ENCODE measurements at regions of chr11 and their contacts with region 1.

Region 1: DNA sequence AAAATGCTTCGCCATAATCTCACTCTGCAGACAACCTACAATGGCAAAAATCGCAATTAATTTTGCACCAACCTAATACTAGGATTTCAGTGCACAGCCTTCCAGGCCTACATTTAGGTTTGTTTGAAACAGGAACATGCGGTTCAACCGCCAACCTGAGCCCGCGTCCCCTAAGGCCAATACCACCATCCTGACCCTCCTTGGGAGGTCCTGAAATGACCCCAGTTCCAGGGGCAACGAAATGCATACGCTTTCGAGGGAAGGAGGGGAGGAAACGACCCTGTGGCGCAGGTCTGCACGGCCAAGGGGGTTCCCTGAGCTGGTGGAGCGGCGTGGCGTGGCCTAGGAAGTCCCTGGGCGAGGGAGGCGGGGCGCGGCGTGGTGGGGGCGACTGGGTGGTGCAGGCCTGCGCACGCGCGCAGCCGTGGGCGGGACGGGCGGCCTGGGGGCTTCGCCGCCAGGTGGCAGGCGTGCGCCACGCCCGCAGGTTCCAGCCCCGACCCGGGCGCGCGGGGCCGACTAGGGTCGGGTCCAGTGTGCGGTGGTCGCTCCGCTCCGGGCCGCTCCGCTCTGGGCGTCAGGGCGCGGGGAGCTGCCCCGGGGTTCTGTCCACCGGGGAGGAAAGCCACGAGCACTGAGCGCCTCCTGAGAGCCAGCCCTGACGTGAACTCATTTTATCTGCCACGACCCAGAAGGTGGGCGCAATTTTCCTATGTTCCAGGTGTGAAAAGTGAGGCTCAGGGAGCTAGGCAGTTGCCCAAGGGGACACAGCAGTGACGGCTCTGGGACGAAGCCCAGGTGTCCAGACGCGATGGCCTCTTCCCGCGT is 94.1 kb downstream of the SWAP70 start:
- DNase-seq: no peak
- ATAC-seq: peak; percentile 86
- H3K4me3 ChIP-seq: peak overlapping the region; percentile 88
- H3K27ac ChIP-seq: peak overlapping the region; percentile 66
- H3K4me1 ChIP-seq: peaks cover 44% of the 10 kb centered on the region
- H3K27me3 ChIP-seq: no peaks in the 10 kb centered on the region
- CTCF ChIP-seq: peak; percentile 70 to 87 (median 83); a peak in 5 of 6 replicates
- EP300 ChIP-seq: peak in 1 of 2 experiments; percentile 58; a peak in 1 of 4 replicates
- POLR2A ChIP-seq: peak; percentile 77
- RAD21 ChIP-seq: peak; percentile 79

Region 2: DNA sequence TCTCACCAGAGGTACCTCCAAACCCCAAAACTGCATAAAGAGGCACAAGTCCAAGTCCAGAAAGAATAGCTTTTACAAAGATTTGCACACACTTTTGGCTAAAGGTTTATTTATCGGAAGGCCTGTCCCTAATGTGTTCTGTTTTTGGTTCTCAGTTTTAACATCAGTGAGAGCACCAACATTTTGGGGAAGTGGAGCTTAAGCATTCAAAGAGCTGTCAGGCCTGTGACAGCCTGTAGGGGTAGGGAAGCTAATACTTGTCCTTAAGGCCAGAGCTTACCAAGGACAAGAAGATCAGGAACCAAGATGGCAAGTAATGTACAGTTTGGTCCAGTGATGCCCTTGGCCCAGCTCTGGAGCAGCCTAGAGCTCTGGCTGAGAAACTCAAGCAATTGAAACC is 627.7 kb before region 1 on chr11:
- CTCF ChIA-PET with region 1: no interaction called
- POLR2A ChIA-PET with region 1: no interaction called
- RAD21 ChIA-PET with region 1: no interaction called
- SMC1A ChIA-PET with region 1: no interaction called
- in situ Hi-C with region 1: no loop called
- intact Hi-C with region 1: no loop called
- DNase-seq: no peak
- ATAC-seq: peak; percentile 72
- H3K4me3 ChIP-seq: no peak overlapping the region
- H3K27ac ChIP-seq: no peak overlapping the region
- H3K4me1 ChIP-seq: no peaks in the 10 kb centered on the region
- H3K27me3 ChIP-seq: no peaks in the 10 kb centered on the region
- CTCF ChIP-seq: peak in 2 of 3 experiments; percentile 15 to 16; a peak in 2 of 6 replicates
- EP300 ChIP-seq: no peak
- POLR2A ChIP-seq: no peak
- RAD21 ChIP-seq: no peak

Region 3: DNA sequence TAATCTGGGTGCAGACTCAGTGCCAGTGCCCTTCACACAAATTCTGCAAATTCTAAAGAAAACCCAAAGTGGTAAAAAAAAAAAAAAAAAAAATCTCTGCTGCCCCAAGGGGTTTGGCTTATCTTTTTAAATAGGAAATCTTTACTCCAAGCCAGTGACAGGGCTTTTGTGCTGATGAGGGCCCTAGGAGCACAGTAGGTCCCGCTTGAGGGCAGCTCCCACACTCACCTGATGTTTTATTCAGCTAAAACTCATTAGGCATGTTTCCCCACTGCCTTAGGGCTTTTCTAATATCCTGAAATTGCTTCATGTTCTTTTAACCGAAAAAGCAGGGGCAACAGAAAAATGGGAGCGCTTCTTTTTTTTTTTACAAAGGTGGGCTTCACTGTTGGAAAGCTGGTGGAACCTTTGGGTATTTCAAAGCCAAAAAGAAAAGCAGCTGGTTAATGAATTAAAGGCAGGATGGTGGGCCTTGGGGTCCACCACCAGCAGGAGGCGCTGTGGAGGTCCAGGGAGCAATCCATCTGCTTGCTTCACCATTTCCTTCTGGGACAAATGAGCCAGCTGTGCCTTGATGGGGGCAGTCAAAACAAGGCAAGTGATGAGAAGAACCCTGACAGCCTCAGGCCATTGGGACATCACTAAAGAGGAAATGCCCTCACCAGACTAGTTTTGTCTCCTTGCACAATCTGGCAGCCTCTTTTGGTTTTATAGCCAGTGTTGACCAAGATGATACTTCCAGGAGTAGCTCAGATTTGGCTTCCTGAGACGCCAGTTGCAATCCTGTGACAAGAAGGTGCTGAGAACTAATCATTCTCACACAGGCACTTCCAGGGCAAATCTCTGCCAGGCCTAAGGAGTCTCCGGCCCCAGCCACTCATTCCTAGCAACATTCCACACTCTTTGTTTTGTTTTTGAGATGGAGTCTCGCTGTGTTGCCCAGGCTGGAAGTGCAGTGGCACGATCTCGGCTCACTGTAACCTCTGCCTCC is 222.9 kb before region 1 on chr11:
- CTCF ChIA-PET with region 1: interaction called, 10 read pairs
- POLR2A ChIA-PET with region 1: no interaction called
- RAD21 ChIA-PET with region 1: interaction called, 6 read pairs
- SMC1A ChIA-PET with region 1: interaction called, 3 read pairs
- in situ Hi-C with region 1: loop called (anchors 5 kb)
- intact Hi-C with region 1: no loop called
- DNase-seq: peak; percentile 25
- ATAC-seq: peak; percentile 87
- H3K4me3 ChIP-seq: no peak overlapping the region
- H3K27ac ChIP-seq: no peak overlapping the region
- H3K4me1 ChIP-seq: no peaks in the 10 kb centered on the region
- H3K27me3 ChIP-seq: no peaks in the 10 kb centered on the region
- CTCF ChIP-seq: peak; percentile 79 to 92 (median 86)
- EP300 ChIP-seq: no peak
- POLR2A ChIP-seq: no peak
- RAD21 ChIP-seq: peak; percentile 79

Region 4: GRCh38 chr11:9861860-9862725 is 104.1 kb after region 1 on chr11:
- CTCF ChIA-PET with region 1: interaction called, 4 read pairs
- POLR2A ChIA-PET with region 1: no interaction called
- RAD21 ChIA-PET with region 1: interaction called, 4 read pairs
- SMC1A ChIA-PET with region 1: no interaction called
- in situ Hi-C with region 1: no loop called
- intact Hi-C with region 1: loop called (anchors 5 kb)
- DNase-seq: peak; percentile 31
- ATAC-seq: peak; percentile 100
- H3K4me3 ChIP-seq: no peak overlapping the region
- H3K27ac ChIP-seq: no peak overlapping the region
- H3K4me1 ChIP-seq: no peaks in the 10 kb centered on the region
- H3K27me3 ChIP-seq: no peaks in the 10 kb centered on the region; a peak in 1 of 4 replicates
- CTCF ChIP-seq: peak; percentile 78 to 89 (median 85)
- EP300 ChIP-seq: no peak
- POLR2A ChIP-seq: no peak
- RAD21 ChIP-seq: peak; percentile 88

Region 5: GRCh38 chr11:10076458-10077141 is 318.6 kb after region 1 on chr11:
- CTCF ChIA-PET with region 1: interaction called, 15 read pairs
- POLR2A ChIA-PET with region 1: no interaction called
- RAD21 ChIA-PET with region 1: interaction called, 6 read pairs
- SMC1A ChIA-PET with region 1: no interaction called
- in situ Hi-C with region 1: no loop called
- intact Hi-C with region 1: loop called (anchors 2 kb)
- DNase-seq: no peak
- ATAC-seq: peak; percentile 87
- H3K4me3 ChIP-seq: no peak overlapping the region
- H3K27ac ChIP-seq: no peak overlapping the region
- H3K4me1 ChIP-seq: no peaks in the 10 kb centered on the region
- H3K27me3 ChIP-seq: no peaks in the 10 kb centered on the region
- CTCF ChIP-seq: peak; percentile 75 to 89 (median 82)
- EP300 ChIP-seq: no peak
- POLR2A ChIP-seq: no peak
- RAD21 ChIP-seq: peak; percentile 65

Region 6: DNA sequence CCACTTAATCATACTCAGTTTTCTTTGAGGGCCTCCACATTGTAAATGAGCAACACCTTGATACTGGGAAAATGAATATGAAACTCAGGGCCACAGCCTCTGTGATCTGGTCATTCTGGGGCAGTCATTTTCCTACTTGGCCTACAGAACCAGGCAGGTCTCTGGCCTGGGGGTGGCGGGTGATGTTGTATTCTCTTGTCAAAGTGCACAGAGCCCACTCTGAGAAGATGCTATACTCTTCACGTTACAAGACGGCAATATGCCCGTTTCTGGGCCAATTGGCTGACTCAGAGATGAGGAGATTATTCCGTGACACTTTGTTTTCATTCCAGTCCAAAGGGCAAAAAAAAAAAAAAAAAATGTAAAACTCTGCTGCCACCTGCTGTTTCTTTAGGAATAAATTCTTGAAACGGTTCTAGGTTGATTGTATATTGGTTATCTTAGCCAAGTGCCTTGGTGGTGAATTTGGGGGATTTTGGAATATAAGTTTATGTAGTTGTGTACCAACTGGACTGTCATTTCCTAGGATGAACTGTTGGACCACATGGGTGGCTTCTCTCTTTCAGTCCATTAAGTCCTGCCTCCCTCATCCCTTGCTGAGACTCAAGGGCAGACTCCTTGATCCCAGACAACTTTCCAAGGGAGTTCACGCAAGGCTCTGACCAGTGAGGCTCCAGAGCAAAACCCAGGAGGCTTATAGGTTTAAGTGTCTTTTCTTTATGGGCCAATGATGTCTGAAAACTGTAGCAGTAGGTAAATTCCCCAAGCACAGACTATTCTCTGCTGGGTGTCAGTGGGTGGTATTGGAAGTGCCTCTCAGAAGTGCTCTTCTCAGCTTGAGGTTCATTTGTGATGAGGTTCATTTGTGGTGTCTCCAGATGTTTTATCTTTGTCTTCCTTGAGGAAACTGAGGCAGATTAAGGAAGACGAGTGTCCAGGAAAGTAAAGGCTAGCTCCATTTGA is 565.1 kb after region 1 on chr11:
- CTCF ChIA-PET with region 1: interaction called, 6 read pairs
- POLR2A ChIA-PET with region 1: no interaction called
- RAD21 ChIA-PET with region 1: interaction called, 3 read pairs
- SMC1A ChIA-PET with region 1: no interaction called
- in situ Hi-C with region 1: loop called (anchors 10 kb)
- intact Hi-C with region 1: loop called (anchors 5 kb)
- DNase-seq: no peak
- ATAC-seq: peak; percentile 84
- H3K4me3 ChIP-seq: no peak overlapping the region
- H3K27ac ChIP-seq: no peak overlapping the region
- H3K4me1 ChIP-seq: peaks cover 8% of the 10 kb centered on the region
- H3K27me3 ChIP-seq: 0 out of 4 replicates have a peak, but pooled peaks cover 0 to 1% of the 10 kb centered on the region in 2 experiments
- CTCF ChIP-seq: peak; percentile 19 to 55 (median 51); a peak in 5 of 6 replicates
- EP300 ChIP-seq: no peak
- POLR2A ChIP-seq: no peak
- RAD21 ChIP-seq: peak; percentile 82